Naive thymus-derived CD4-positive, alpha-beta T cell (primary cell): ENCODE measurements at regions of chr15 and their contacts with region 1.

Region 1: DNA sequence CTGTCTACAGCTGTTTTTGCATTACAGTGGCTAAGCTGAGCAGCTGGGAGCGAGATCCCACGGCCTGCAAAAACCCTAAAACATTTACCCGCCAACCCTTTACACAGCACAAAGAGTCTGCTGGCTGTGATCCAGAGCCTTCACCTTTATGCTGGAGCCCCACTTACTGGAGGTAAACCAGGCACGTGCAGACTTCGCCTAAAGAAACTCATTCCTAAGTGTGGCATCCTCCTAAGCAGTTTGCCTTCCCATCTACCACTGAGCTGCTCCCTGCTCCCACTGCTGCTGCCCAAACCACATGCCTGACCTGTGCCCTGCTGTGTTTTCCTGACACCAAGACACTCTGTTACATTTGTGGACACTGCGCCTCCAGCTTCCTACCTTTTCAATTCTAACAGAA is 53.0 kb downstream of the CHSY1 start:
- DNase-seq: no peak
- ATAC-seq: no peak
- H3K4me3 ChIP-seq: no peak overlapping the region
- H3K4me3 Mint-ChIP-seq: peak overlapping the region in 2 of 10 donors; percentile 38 to 70
- H3K27ac ChIP-seq: no peak overlapping the region
- H3K27ac Mint-ChIP-seq: peak overlapping the region in 3 of 9 donors; percentile 73 to 83 (median 76)
- H3K4me1 ChIP-seq: peaks cover 22 to 23% of the 10 kb centered on the region in 2 donors
- H3K4me1 Mint-ChIP-seq: peaks cover 39 to 86% (median 80%) of the 10 kb centered on the region in 7 donors
- H3K27me3 ChIP-seq: no peaks in the 10 kb centered on the region
- H3K27me3 Mint-ChIP-seq: no peaks in the 10 kb centered on the region

Region 2: DNA sequence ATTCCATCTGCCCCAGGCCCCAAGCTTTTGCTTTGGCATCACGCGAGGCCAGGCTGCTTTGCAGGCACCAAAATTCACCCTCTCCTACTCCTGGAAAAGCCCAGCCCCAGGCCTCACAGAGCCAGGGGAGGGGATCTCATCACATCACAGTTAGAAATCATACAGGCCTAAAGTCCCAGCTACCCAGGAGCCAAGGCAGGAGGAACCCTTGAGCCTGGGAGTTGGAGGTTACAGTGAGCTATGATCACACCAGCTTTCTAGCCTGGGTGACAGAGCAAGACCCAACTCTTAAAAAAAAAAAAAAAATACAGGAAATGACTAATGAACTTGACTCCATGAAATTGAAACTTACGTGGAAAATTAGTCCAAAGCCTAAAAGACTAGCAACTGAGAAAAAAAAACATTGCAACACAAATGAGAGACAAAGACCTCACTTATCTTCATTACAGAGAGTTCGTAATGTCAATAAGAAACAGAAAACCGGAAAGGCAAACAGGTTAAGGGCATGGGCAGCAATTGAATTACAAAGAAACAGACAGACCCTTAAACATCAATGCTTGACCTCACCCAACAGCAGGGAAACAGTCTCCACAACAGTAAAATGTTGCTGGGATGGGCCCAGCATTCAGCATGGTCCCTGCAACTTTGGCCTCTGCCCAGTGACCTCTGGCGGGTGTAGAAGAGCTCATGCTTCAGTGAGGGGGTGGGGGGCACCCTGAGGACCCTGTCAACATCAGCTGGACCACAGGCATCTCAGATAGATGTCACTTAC is 128.1 kb before region 1 on chr15:
- CTCF ChIA-PET with region 1: no interaction called
- POLR2A ChIA-PET with region 1: no interaction called
- intact Hi-C with region 1: no loop called
- DNase-seq: no peak
- ATAC-seq: no peak
- H3K4me3 ChIP-seq: no peak overlapping the region
- H3K4me3 Mint-ChIP-seq: peak overlapping the region in 1 of 10 donors; percentile 43
- H3K27ac ChIP-seq: no peak overlapping the region
- H3K27ac Mint-ChIP-seq: peak overlapping the region in 2 of 9 donors; percentile 43 to 89
- H3K4me1 ChIP-seq: no peaks in the 10 kb centered on the region
- H3K4me1 Mint-ChIP-seq: peaks cover 0 to 13% (median 0%) of the 10 kb centered on the region in 7 donors
- H3K27me3 ChIP-seq: no peaks in the 10 kb centered on the region
- H3K27me3 Mint-ChIP-seq: peaks cover 0 to 10% (median 0%) of the 10 kb centered on the region in 5 donors

Region 3: GRCh38 chr15:101088788-101089583 is 109.8 kb before region 1 on chr15:
- CTCF ChIA-PET with region 1: no interaction called
- POLR2A ChIA-PET with region 1: no interaction called
- intact Hi-C with region 1: loop called in 1 of 2 experiments (anchors 2 kb)
- DNase-seq: peak; percentile 45 to 89 (median 74)
- ATAC-seq: peak; percentile 92
- H3K4me3 ChIP-seq: no peak overlapping the region
- H3K4me3 Mint-ChIP-seq: peak overlapping the region in 2 of 10 donors; percentile 13 to 24
- H3K27ac ChIP-seq: no peak overlapping the region
- H3K27ac Mint-ChIP-seq: peak overlapping the region in 1 of 9 donors; percentile 49
- H3K4me1 ChIP-seq: no peaks in the 10 kb centered on the region
- H3K4me1 Mint-ChIP-seq: peaks cover 0 to 13% (median 0%) of the 10 kb centered on the region in 7 donors
- H3K27me3 ChIP-seq: no peaks in the 10 kb centered on the region
- H3K27me3 Mint-ChIP-seq: peaks cover 0 to 10% (median 4%) of the 10 kb centered on the region in 5 donors

Region 4: DNA sequence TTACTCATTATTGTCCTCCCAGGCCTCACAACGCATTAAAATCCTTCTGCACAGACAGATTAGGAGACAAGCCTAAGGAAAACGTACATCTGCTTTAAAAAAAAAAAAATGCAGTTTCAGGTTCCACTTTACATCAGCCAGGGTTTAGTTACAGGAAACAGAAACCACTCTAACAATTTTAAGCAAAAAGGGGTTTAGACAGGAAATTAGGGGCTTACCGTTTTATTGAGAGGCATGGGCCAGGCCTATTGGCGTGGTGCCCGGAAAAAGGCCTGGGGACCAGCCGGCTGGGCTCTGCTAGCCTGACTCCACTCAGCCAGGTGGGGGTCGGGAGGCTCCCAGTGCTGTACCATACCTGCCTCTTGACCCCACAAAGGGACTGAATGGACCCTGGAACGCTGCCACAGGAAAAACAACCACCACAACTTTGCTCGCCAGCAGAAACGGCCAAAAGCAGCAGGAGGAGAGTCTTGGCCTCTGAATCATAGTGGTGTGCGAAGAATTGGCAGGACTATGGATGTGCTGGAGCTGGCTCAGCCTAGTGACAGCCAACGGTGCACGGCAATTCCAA is 71.2 kb before region 1 on chr15:
- CTCF ChIA-PET with region 1: no interaction called
- POLR2A ChIA-PET with region 1: no interaction called
- intact Hi-C with region 1: loop called in 1 of 2 experiments (anchors 2 kb)
- DNase-seq: peak in 6 of 9 donors; percentile 17 to 43 (median 24)
- ATAC-seq: peak; percentile 56
- H3K4me3 ChIP-seq: peak overlapping the region; percentile 5
- H3K4me3 Mint-ChIP-seq: peak overlapping the region; percentile 8 to 84 (median 66)
- H3K27ac ChIP-seq: peak overlapping the region; percentile 43
- H3K27ac Mint-ChIP-seq: peak overlapping the region; percentile 77 to 98 (median 92)
- H3K4me1 ChIP-seq: peaks cover 24 to 25% of the 10 kb centered on the region in 2 donors
- H3K4me1 Mint-ChIP-seq: peaks cover 30 to 68% (median 38%) of the 10 kb centered on the region in 7 donors
- H3K27me3 ChIP-seq: no peaks in the 10 kb centered on the region
- H3K27me3 Mint-ChIP-seq: peaks cover 0 to 6% (median 0%) of the 10 kb centered on the region in 5 donors

Region 5: DNA sequence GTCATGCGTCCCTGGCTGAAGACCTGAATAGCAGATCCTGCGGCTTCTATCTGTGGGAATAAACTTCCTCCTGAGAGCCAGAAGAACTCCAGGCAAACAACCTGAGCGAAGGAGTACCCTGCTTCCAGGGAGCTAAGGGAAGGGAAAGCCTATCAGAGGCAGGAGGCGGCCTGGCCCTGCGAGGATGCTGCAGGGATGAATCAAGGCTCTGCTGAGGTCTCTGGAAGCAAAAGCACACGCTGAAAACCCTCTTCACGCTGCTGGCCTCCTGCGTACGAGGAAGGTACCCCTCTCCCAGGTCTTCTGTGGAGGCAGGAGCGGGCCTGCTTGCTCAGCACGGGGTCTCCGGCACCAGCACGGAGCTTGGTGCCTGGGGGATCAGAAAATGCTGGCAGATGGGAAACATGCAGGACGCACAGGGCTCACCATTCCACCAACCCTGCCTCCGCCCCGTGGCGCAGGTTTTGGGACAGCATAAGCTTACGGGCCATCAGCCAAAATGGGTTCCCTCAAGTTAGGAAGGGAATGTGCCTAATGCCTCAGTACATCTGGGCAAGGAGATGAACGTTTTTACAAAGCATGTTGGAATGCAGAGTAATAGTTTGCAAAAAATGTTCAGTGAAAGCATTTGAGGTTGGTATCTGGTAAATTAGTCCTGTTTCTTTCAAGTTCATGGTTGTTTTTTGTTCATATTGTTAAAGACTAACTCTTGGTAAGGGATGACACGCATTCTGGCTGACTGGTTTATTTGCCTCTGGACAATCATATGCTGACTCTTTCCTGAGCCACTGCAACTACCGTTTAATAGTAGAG is 19.3 kb before region 1 on chr15:
- CTCF ChIA-PET with region 1: no interaction called
- POLR2A ChIA-PET with region 1: no interaction called
- intact Hi-C with region 1: loop called in 1 of 2 experiments (anchors 2 kb)
- DNase-seq: no peak
- ATAC-seq: no peak
- H3K4me3 ChIP-seq: no peak overlapping the region
- H3K4me3 Mint-ChIP-seq: no peak overlapping the region
- H3K27ac ChIP-seq: no peak overlapping the region
- H3K27ac Mint-ChIP-seq: peak overlapping the region in 6 of 9 donors; percentile 38 to 81 (median 64)
- H3K4me1 ChIP-seq: peaks cover 0 to 9% of the 10 kb centered on the region in 2 donors
- H3K4me1 Mint-ChIP-seq: peaks cover 24 to 62% (median 30%) of the 10 kb centered on the region in 7 donors
- H3K27me3 ChIP-seq: no peaks in the 10 kb centered on the region
- H3K27me3 Mint-ChIP-seq: no peaks in the 10 kb centered on the region